IMR-90 (cell line): ENCODE measurements at regions of chr2 and their contacts with region 1.

Region 1: GRCh38 chr2:28445448-28446258 is 50.2 kb upstream of the PLB1 start:
- DNase-seq: peak; percentile 97
- ATAC-seq: peak; percentile 84
- H3K4me3 ChIP-seq: no peak overlapping the region
- H3K27ac ChIP-seq: peak overlapping the region; percentile 63
- H3K4me1 ChIP-seq: peaks cover 37% of the 10 kb centered on the region
- H3K27me3 ChIP-seq: no peaks in the 10 kb centered on the region
- CTCF ChIP-seq: no peak
- POLR2A ChIP-seq: no peak
- RAD21 ChIP-seq: no peak

Region 2: GRCh38 chr2:27335311-27335710 is 1110.3 kb before region 1 on chr2:
- CTCF ChIA-PET with region 1: no interaction called
- POLR2A ChIA-PET with region 1: no interaction called
- dilution Hi-C with region 1: no loop called
- in situ Hi-C with region 1: no loop called
- intact Hi-C with region 1: no loop called
- DNase-seq: no peak
- ATAC-seq: no peak
- H3K4me3 ChIP-seq: no peak overlapping the region
- H3K27ac ChIP-seq: no peak overlapping the region
- H3K4me1 ChIP-seq: no peaks in the 10 kb centered on the region
- H3K27me3 ChIP-seq: no peaks in the 10 kb centered on the region
- CTCF ChIP-seq: no peak
- POLR2A ChIP-seq: no peak
- RAD21 ChIP-seq: no peak

Region 3: GRCh38 chr2:27703638-27704341 is 741.9 kb before region 1 on chr2:
- CTCF ChIA-PET with region 1: interaction called, 3 read pairs
- POLR2A ChIA-PET with region 1: no interaction called
- dilution Hi-C with region 1: no loop called
- in situ Hi-C with region 1: no loop called
- intact Hi-C with region 1: loop called (anchors 5 kb)
- DNase-seq: peak; percentile 96
- ATAC-seq: peak; percentile 70
- H3K4me3 ChIP-seq: no peak overlapping the region
- H3K27ac ChIP-seq: peak overlapping the region; percentile 35; the same call in 1 of the 2 replicates
- H3K4me1 ChIP-seq: peaks cover 18% of the 10 kb centered on the region
- H3K27me3 ChIP-seq: no peaks in the 10 kb centered on the region
- CTCF ChIP-seq: peak; percentile 96
- POLR2A ChIP-seq: no peak
- RAD21 ChIP-seq: peak; percentile 93

Region 4: GRCh38 chr2:28370355-28370754 is 75.3 kb before region 1 on chr2:
- CTCF ChIA-PET with region 1: no interaction called
- POLR2A ChIA-PET with region 1: interaction called, 11 read pairs
- dilution Hi-C with region 1: no loop called
- in situ Hi-C with region 1: no loop called
- intact Hi-C with region 1: no loop called
- DNase-seq: no peak
- ATAC-seq: no peak
- H3K4me3 ChIP-seq: no peak overlapping the region
- H3K27ac ChIP-seq: no peak overlapping the region
- H3K4me1 ChIP-seq: peaks cover 2% of the 10 kb centered on the region; the same call in 1 of the 2 replicates
- H3K27me3 ChIP-seq: peaks cover 6% of the 10 kb centered on the region
- CTCF ChIP-seq: no peak
- POLR2A ChIP-seq: no peak
- RAD21 ChIP-seq: no peak

Region 5: DNA sequence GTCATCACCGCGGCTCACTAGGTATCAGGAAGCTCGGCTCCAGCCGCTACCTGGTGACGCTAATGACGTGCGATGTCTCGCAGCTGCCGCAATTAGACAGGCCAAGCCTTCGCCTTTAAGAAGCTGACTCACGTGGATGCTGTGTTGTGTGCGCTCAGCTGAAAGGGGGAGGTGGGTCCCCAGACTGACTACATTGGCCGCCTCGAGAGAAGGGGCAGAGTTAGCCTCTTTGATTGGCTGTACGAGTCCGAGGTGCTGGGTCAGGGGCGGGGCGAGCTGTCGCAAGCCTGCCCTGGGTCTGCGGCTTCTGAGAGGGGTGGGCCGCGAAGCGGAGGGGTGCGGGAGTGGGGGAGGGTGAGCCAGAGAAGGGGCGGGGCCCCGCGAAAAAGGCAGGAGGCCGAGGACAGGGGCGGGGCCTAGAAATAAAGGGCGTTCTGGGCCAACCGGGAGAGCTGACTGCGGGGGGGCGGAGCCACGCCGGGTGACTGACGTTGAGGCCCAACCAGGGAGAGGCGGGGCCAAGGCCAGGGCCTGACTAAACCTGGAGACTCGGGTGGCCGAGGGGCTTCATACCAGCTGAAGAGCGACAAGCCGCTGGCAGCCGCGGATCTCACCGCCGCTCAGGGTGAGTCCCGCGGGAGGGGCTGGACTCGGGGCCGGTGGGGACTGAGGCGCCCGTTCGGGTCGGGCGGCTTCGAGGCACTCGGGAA is 1700.9 kb after region 1 on chr2 and contains the start of gene YPEL5:
- CTCF ChIA-PET with region 1: no interaction called
- POLR2A ChIA-PET with region 1: no interaction called
- dilution Hi-C with region 1: no loop called
- in situ Hi-C with region 1: no loop called
- intact Hi-C with region 1: no loop called
- DNase-seq: peak; percentile 99
- ATAC-seq: peak; percentile 93
- H3K4me3 ChIP-seq: peak within 1 kb of the TSS; percentile 67
- H3K27ac ChIP-seq: peak within 1 kb of the TSS; percentile 91
- H3K4me1 ChIP-seq: peaks cover 7% of the 10 kb centered on the region
- H3K27me3 ChIP-seq: no peaks in the 10 kb centered on the region
- CTCF ChIP-seq: no peak
- POLR2A ChIP-seq: peak; percentile 96
- RAD21 ChIP-seq: no peak
- total RNA-seq, gene YPEL5: 40.7 and 54.7 TPM in 2 replicates